ENCODE measurements at regions of chr4 and their contacts with region 1.

Region 1: GRCh38 chr4:55116450-55116849 is 8.9 kb downstream of the KDR start:
- DNase-seq: no peak

Region 2: DNA sequence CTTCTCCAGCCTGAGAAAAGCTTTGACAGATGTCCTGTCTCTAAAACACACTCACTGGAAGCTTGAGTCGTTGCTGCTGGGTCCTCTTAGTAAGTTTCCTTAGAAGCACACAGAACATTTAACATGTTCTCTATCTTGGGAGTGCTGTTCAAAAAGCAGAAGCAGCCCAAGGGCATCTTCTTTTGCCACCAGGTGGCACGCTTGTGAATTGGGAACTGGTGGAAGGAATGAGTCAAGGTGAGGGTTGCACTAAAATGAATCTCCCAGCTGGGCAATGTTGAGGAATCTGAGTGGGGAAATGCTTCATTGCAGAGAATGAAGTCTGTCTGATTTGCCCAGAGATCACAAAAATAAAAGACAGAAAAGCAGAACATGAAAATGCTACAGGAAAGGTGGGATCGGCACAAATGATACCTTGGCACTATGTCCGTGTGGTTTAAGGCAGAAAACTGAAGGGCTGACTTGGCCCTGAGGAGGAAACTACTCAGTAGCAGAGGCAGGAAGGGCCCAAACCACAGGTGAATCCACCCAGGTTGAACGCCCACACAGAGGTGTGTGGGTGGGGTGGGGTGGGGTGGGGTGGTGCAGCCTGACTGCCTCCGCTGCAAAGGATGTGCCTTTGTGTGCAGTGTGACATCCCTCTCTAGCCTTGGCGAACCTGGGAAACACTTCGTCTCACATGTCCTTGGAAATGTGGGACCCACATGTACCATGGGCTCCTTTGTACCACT is 432.7 kb before region 1 on chr4:
- intact Hi-C with region 1: no loop called
- DNase-seq: no peak

Region 3: DNA sequence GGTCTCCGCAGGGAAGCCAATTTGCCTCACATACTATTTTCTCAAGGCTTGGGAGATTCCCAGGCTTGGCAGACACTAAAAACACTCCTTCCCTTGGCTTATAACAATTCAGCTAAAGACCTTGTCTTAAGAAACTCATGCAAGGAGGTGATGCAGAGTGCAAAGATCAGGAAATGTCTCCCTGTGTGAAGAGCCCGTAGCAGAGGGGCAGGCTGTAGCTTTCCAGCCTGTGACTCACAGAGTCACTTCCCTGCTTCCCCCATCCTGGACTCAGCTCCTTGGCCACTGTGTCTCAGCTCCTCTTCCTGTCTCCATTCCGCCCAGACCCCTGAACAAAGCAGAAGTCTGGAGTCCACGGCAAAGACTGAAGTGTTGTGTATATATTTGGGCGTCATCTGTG is 47.2 kb before region 1 on chr4:
- intact Hi-C with region 1: loop called (anchors 5 kb)
- DNase-seq: no peak